B cell (primary cell): ENCODE measurements at regions of chr17 and their contacts with region 1.

Region 1: DNA sequence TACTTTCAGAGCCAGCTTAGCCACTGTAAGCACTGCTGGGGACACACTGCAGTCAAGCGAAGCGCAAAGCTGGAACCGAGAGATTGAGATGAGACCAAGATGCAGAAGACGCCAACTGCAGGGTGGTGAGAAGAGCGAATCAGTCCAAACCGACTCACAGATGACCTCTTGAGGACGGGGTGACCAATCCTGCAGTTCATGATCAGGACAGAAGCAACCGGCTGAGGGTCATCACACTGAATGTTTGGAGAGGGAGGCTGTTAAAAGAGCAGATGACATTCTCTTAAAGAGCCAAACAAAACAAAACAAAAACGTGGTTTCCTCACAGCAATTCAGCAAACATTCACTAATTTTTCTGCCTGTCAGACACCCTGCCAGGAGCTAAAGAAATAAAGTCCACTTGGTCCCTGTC is 8.5 kb downstream of the HASPIN start:
- DNase-seq: peak; percentile 65
- ATAC-seq: peak; percentile 87
- H3K4me3 ChIP-seq: no peak overlapping the region
- H3K4me3 Mint-ChIP-seq: peak overlapping the region; percentile 51
- H3K27ac ChIP-seq: peak overlapping the region in 1 of 2 donors; percentile 4
- H3K27ac Mint-ChIP-seq: peak overlapping the region; percentile 66
- H3K4me1 ChIP-seq: peaks cover 16 to 30% of the 10 kb centered on the region in 2 donors
- H3K4me1 Mint-ChIP-seq: peaks cover 42% of the 10 kb centered on the region
- H3K27me3 ChIP-seq: no peaks in the 10 kb centered on the region
- H3K27me3 Mint-ChIP-seq: no peaks in the 10 kb centered on the region
- CTCF ChIP-seq: no peak

Region 2: GRCh38 chr17:3260600-3260999 is 471.6 kb before region 1 on chr17:
- CTCF ChIA-PET with region 1: no interaction called
- POLR2A ChIA-PET with region 1: no interaction called
- intact Hi-C with region 1: no loop called
- DNase-seq: no peak
- ATAC-seq: no peak
- H3K4me3 ChIP-seq: no peak overlapping the region
- H3K4me3 Mint-ChIP-seq: no peak overlapping the region
- H3K27ac ChIP-seq: no peak overlapping the region
- H3K27ac Mint-ChIP-seq: no peak overlapping the region
- H3K4me1 ChIP-seq: no peaks in the 10 kb centered on the region
- H3K4me1 Mint-ChIP-seq: no peaks in the 10 kb centered on the region
- H3K27me3 ChIP-seq: no peaks in the 10 kb centered on the region
- H3K27me3 Mint-ChIP-seq: peaks cover 5% of the 10 kb centered on the region
- CTCF ChIP-seq: no peak

Region 3: GRCh38 chr17:3602499-3602898 is 129.7 kb before region 1 on chr17:
- CTCF ChIA-PET with region 1: interaction called, 17 read pairs
- POLR2A ChIA-PET with region 1: no interaction called
- intact Hi-C with region 1: no loop called
- DNase-seq: peak; percentile 58
- ATAC-seq: peak; percentile 60
- H3K4me3 ChIP-seq: no peak overlapping the region
- H3K4me3 Mint-ChIP-seq: no peak overlapping the region
- H3K27ac ChIP-seq: no peak overlapping the region
- H3K27ac Mint-ChIP-seq: no peak overlapping the region
- H3K4me1 ChIP-seq: no peaks in the 10 kb centered on the region
- H3K4me1 Mint-ChIP-seq: peaks cover 2% of the 10 kb centered on the region
- H3K27me3 ChIP-seq: no peaks in the 10 kb centered on the region
- H3K27me3 Mint-ChIP-seq: no peaks in the 10 kb centered on the region
- CTCF ChIP-seq: peak; percentile 43

Region 4: GRCh38 chr17:3688027-3688553 is 44.1 kb before region 1 on chr17:
- CTCF ChIA-PET with region 1: interaction called, 184 read pairs
- POLR2A ChIA-PET with region 1: interaction called, 16 read pairs
- intact Hi-C with region 1: loop called (anchors 2 kb)
- DNase-seq: peak; percentile 77
- ATAC-seq: peak; percentile 18
- H3K4me3 ChIP-seq: peak overlapping the region in 3 of 5 experiments; percentile 24 to 37 (median 33)
- H3K4me3 Mint-ChIP-seq: peak overlapping the region; percentile 83
- H3K27ac ChIP-seq: peak overlapping the region; percentile 41 to 58
- H3K27ac Mint-ChIP-seq: peak overlapping the region; percentile 96
- H3K4me1 ChIP-seq: peaks cover 66 to 74% of the 10 kb centered on the region in 2 donors
- H3K4me1 Mint-ChIP-seq: peaks cover 67% of the 10 kb centered on the region
- H3K27me3 ChIP-seq: no peaks in the 10 kb centered on the region
- H3K27me3 Mint-ChIP-seq: no peaks in the 10 kb centered on the region
- CTCF ChIP-seq: no peak

Region 5: DNA sequence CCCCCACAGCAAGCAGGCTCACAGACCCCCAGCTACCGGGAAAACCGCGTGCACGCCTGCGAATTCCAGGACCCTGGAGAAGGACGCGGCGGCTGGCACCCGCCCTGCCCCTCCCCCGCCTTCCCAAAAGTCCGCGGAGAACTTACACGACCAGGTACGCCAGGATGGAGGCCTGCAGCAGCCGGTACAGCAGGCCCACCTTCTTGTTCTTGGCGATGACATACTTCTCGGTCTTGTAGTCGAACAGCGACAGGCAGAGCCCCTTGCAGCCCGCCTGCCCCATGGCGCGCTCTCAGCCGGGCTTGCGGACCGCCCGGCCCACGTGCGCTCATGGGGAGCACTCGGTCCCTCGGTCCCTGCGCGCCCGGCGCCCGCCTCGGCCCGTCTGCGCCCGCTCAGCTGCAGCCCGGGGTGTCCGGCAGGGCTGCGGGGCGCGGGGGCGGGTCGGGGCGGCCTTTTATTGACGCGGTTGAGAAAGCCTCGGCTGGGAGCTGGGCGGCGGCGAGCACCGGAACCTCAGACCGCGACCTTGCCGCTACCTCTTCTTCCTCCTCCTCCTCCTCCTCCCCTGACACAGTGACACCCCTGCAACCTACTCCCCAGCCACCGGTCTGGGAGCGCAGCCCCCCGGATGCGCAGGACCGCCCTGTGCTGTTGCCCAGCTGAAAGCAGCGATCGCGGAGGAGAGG is 36.3 kb before region 1 on chr17 and contains the start of gene P2RX5:
- CTCF ChIA-PET with region 1: interaction called, 52 read pairs
- POLR2A ChIA-PET with region 1: interaction called, 16 read pairs
- intact Hi-C with region 1: no loop called
- DNase-seq: peak; percentile 80
- ATAC-seq: peak; percentile 52
- H3K4me3 ChIP-seq: peak within 1 kb of the TSS; percentile 58 to 93 (median 83)
- H3K4me3 Mint-ChIP-seq: peak within 1 kb of the TSS; percentile 100
- H3K27ac ChIP-seq: peak within 1 kb of the TSS; percentile 76 to 91
- H3K27ac Mint-ChIP-seq: peak within 1 kb of the TSS; percentile 99
- H3K4me1 ChIP-seq: peaks cover 35 to 65% of the 10 kb centered on the region in 2 donors
- H3K4me1 Mint-ChIP-seq: peaks cover 61% of the 10 kb centered on the region
- H3K27me3 ChIP-seq: no peaks in the 10 kb centered on the region
- H3K27me3 Mint-ChIP-seq: no peaks in the 10 kb centered on the region
- CTCF ChIP-seq: no peak
- total RNA-seq, gene P2RX5: 405 and 410 TPM in 2 replicates

Region 6: GRCh38 chr17:4366327-4367063 is 634.3 kb after region 1 on chr17 and contains the start of gene UBE2G1:
- CTCF ChIA-PET with region 1: no interaction called
- POLR2A ChIA-PET with region 1: no interaction called
- intact Hi-C with region 1: no loop called
- DNase-seq: peak; percentile 99
- ATAC-seq: peak; percentile 81
- H3K4me3 ChIP-seq: peak within 1 kb of the TSS; percentile 50 to 97 (median 90)
- H3K4me3 Mint-ChIP-seq: peak within 1 kb of the TSS; percentile 87
- H3K27ac ChIP-seq: peak within 1 kb of the TSS; percentile 63 to 89
- H3K27ac Mint-ChIP-seq: peak within 1 kb of the TSS; percentile 93
- H3K4me1 ChIP-seq: peaks cover 10 to 34% of the 10 kb centered on the region in 2 donors
- H3K4me1 Mint-ChIP-seq: peaks cover 44% of the 10 kb centered on the region
- H3K27me3 ChIP-seq: no peaks in the 10 kb centered on the region
- H3K27me3 Mint-ChIP-seq: no peaks in the 10 kb centered on the region
- CTCF ChIP-seq: no peak
- total RNA-seq, gene UBE2G1: 76.0 and 78.1 TPM in 2 replicates